GM12878 (cell line): ENCODE measurements at regions of chr12 and their contacts with region 1.

Region 1: DNA sequence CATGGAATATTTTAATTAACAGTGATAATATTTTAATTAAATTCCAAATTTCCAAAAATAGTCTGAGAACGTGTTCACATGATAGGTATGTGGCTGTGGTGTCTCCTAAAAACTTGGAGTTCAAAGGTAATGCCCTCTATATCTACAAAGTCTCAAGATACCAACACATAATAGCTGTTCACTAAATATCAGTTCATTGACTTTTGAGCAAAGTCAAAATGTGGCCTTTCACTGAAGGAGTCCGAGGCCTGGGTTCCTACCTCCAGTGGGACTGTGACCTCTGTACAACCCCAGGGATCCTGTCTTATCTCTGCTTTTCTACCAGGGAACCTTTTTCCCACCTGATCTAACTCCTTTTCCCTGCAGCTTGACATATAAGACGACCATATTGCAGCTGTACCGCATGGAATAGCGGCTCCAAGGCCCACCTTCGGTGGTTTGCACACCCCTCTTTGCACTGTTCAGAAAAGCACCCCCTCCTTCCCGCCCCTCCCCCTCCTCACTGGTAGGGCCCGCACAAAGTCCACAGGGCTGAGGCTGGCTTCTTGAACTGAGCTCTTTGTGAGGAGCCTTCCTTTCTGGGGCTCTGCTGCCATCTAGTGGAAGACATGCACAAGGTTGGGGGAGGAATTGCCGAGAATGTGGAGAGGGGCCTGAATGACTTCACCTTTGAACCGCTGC is 3.1 kb downstream of the CCND2 start:
- DNase-seq: peak; percentile 78
- ATAC-seq: peak; percentile 48
- H3K4me3 ChIP-seq: peak overlapping the region; percentile 99
- H3K27ac ChIP-seq: peak overlapping the region; percentile 2; the same call in 1 of the 2 replicates
- H3K4me1 ChIP-seq: peaks cover 26% of the 10 kb centered on the region
- H3K27me3 ChIP-seq: no peaks in the 10 kb centered on the region
- CTCF ChIP-seq: peak; percentile 84 to 93 (median 85)
- EP300 ChIP-seq: no peak
- POLR2A ChIP-seq: 0 out of 2 replicates have a peak, but pooled peaks have one; percentile 42
- RAD21 ChIP-seq: peak; percentile 100

Region 2: DNA sequence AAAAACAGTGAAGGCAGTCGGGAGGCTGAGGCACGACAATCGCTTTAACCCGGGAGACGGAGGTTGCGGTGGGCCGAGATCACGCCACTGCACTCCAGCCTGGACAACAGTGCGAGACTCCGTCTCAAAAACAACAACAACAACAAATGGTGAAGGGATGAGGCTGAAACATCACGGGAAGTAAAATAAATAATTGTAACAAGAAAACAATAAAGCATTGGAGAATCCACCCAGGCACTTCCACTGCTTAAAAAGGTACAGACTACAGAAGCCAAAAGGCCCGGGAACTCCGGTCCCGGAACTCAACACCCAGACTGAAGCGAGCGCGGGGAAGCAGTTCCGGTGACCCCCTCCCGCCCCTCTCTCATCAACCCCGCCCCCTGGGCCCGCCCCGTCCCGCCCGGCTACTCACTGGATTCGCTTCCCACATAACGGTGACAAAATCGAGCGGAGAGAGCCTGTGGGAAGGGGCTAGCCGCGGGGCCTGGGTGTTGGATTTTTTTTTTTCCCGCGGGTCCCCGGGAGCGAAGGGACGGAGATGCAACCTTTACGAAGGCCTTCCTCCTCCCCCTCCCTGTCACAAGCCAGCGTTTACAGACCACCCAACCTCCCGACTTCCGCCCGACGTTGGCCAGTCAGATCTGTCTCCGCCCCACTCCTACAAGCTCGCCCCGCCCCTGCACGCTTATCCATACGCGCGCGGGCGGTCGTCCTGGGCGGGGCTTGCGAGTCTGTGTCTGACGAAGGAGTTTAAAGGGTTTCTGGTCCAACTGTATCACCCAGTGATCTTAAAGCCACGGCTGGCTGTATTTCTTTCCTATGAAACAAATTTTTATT is 403.6 kb before region 1 on chr12 and contains the start of gene PARP11:
- CTCF ChIA-PET with region 1: interaction called, 4 read pairs
- POLR2A ChIA-PET with region 1: no interaction called
- RAD21 ChIA-PET with region 1: interaction called, 4 read pairs
- SMC1A ChIA-PET with region 1: interaction called, 3 read pairs
- in situ Hi-C with region 1: no loop called
- intact Hi-C with region 1: loop called (anchors 5 kb)
- DNase-seq: peak; percentile 87
- ATAC-seq: peak; percentile 98
- H3K4me3 ChIP-seq: peak within 1 kb of the TSS; percentile 91
- H3K27ac ChIP-seq: peak within 1 kb of the TSS; percentile 92
- H3K4me1 ChIP-seq: peaks cover 13% of the 10 kb centered on the region
- H3K27me3 ChIP-seq: no peaks in the 10 kb centered on the region
- CTCF ChIP-seq: no peak
- EP300 ChIP-seq: 0 out of 4 replicates have a peak, but pooled peaks of 1 of the 2 experiments have one; percentile 19
- POLR2A ChIP-seq: peak; percentile 77
- RAD21 ChIP-seq: no peak
- polyA plus RNA-seq, gene PARP11: 3.7 to 5.5 TPM

Region 3: GRCh38 chr12:3988519-3989448 is 287.9 kb before region 1 on chr12:
- CTCF ChIA-PET with region 1: interaction called, 10 read pairs
- POLR2A ChIA-PET with region 1: no interaction called
- RAD21 ChIA-PET with region 1: interaction called, 11 read pairs
- SMC1A ChIA-PET with region 1: interaction called, 91 read pairs
- in situ Hi-C with region 1: loop called (anchors 5 kb)
- intact Hi-C with region 1: no loop called
- DNase-seq: peak; percentile 36
- ATAC-seq: peak; percentile 81
- H3K4me3 ChIP-seq: no peak overlapping the region
- H3K27ac ChIP-seq: no peak overlapping the region
- H3K4me1 ChIP-seq: peaks cover 8% of the 10 kb centered on the region
- H3K27me3 ChIP-seq: no peaks in the 10 kb centered on the region; a peak in 1 of 4 replicates
- CTCF ChIP-seq: no peak
- EP300 ChIP-seq: no peak
- POLR2A ChIP-seq: no peak
- RAD21 ChIP-seq: no peak

Region 4: DNA sequence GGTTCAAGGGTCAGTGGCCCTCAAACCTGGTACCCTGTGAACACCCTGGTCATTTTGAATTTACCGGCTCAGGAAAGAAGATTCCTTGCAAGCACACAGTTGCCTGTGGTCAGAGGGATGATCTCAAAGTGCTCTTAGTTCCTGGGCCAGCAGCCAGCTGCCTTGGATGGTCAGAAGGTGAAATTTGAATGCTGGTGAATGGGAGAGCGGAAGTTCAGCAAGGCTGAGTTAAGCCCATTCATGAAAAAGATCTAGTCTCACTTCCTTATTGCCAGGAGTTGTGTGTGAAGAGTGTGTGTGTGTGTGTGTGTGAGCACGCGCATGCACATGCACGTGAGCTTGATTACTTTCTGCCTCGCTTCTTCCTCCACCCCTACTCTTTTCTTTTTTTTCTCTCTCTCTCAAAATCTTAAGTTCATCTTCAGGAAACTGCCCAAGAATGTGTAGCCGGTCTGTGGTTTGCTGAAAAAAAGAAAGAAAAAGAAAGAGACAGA is 158.6 kb before region 1 on chr12:
- CTCF ChIA-PET with region 1: interaction called, 184 read pairs
- POLR2A ChIA-PET with region 1: interaction called, 193 read pairs
- RAD21 ChIA-PET with region 1: interaction called, 129 read pairs
- SMC1A ChIA-PET with region 1: interaction called, 222 read pairs
- in situ Hi-C with region 1: no loop called
- intact Hi-C with region 1: loop called (anchors 1 kb)
- DNase-seq: peak; percentile 89
- ATAC-seq: peak; percentile 54
- H3K4me3 ChIP-seq: peak overlapping the region; percentile 56
- H3K27ac ChIP-seq: peak overlapping the region; percentile 95
- H3K4me1 ChIP-seq: peaks cover 50% of the 10 kb centered on the region
- H3K27me3 ChIP-seq: no peaks in the 10 kb centered on the region
- CTCF ChIP-seq: no peak
- EP300 ChIP-seq: peak; percentile 83 to 94; a peak in 3 of 4 replicates
- POLR2A ChIP-seq: no peak
- RAD21 ChIP-seq: no peak

Region 5: GRCh38 chr12:4251216-4251891 is 25.3 kb before region 1 on chr12:
- CTCF ChIA-PET with region 1: interaction called, 12 read pairs
- POLR2A ChIA-PET with region 1: interaction called, 7 read pairs
- RAD21 ChIA-PET with region 1: interaction called, 17 read pairs
- SMC1A ChIA-PET with region 1: interaction called, 9 read pairs
- in situ Hi-C with region 1: no loop called
- intact Hi-C with region 1: no loop called
- DNase-seq: no peak
- ATAC-seq: peak; percentile 70
- H3K4me3 ChIP-seq: no peak overlapping the region
- H3K27ac ChIP-seq: no peak overlapping the region
- H3K4me1 ChIP-seq: peaks cover 4% of the 10 kb centered on the region
- H3K27me3 ChIP-seq: no peaks in the 10 kb centered on the region; a peak in 1 of 4 replicates
- CTCF ChIP-seq: peak in 1 of 3 experiments; percentile 19; a peak in 1 of 6 replicates
- EP300 ChIP-seq: no peak
- POLR2A ChIP-seq: no peak
- RAD21 ChIP-seq: peak; percentile 23; the same call in 1 of the 2 replicates

Region 6: DNA sequence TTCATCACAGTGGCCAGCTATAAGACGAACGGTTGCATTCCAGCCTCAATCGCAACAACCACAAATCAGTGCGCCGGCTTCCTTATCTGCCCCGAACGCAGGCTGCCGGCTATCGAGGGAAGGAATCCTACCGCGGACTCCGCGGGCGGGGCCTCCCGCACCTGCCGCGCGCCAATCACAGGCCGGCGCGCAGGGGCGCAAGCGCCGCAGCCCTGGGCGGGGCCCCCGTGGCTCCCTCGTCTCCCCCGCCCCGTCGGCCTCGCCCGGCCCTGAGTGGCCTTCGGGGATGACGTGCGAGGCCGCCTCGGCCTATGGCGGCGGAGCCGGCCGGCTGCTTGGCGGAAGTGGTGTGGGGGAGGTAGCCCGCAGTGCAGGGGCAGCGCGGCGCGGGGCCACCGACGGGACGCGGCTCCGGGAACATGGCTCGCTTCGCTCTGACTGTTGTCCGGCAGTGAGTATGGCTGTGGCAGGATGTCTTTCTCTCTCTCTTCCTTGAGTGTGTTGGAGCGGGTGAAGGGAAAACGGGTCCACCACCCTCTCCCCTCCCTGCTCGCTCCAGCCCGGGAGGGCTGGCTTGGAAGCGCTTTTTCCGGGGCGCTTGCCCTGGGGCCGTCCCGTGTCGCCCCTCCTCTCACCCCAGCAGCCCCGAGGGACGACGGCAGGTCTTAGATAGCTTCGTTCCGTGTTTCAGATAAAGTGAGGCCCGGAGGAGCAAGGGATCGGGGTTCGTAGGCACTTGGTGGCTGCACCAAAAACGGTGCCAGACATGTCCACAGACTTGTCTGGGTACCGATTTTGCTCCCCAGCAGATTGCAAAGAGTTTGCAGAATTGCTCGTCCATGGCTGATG is 44.4 kb after region 1 on chr12 and contains the start of gene TIGAR:
- CTCF ChIA-PET with region 1: interaction called, 6 read pairs
- POLR2A ChIA-PET with region 1: interaction called, 7 read pairs
- RAD21 ChIA-PET with region 1: interaction called, 7 read pairs
- SMC1A ChIA-PET with region 1: interaction called, 14 read pairs
- in situ Hi-C with region 1: no loop called
- intact Hi-C with region 1: no loop called
- DNase-seq: peak; percentile 70
- ATAC-seq: peak; percentile 96
- H3K4me3 ChIP-seq: peak within 1 kb of the TSS; percentile 88
- H3K27ac ChIP-seq: peak within 1 kb of the TSS; percentile 90
- H3K4me1 ChIP-seq: peaks cover 3% of the 10 kb centered on the region; the same call in 1 of the 2 replicates
- H3K27me3 ChIP-seq: no peaks in the 10 kb centered on the region
- CTCF ChIP-seq: no peak
- EP300 ChIP-seq: no peak
- POLR2A ChIP-seq: peak; percentile 100
- RAD21 ChIP-seq: no peak
- polyA plus RNA-seq, gene TIGAR: 32.9 to 45.7 TPM